Calu3 (cell line): ENCODE measurements at regions of chr6 and their contacts with region 1.

Region 1: GRCh38 chr6:27893059-27893835 is 18.9 kb downstream of the OR2B2 start:
- DNase-seq: peak; percentile 94
- H3K4me3 Mint-ChIP-seq: no peak overlapping the region
- H3K27ac Mint-ChIP-seq: no peak overlapping the region
- H3K4me1 Mint-ChIP-seq: peaks cover 19% of the 10 kb centered on the region
- H3K27me3 Mint-ChIP-seq: no peaks in the 10 kb centered on the region
- CTCF ChIP-seq: no peak

Region 2: DNA sequence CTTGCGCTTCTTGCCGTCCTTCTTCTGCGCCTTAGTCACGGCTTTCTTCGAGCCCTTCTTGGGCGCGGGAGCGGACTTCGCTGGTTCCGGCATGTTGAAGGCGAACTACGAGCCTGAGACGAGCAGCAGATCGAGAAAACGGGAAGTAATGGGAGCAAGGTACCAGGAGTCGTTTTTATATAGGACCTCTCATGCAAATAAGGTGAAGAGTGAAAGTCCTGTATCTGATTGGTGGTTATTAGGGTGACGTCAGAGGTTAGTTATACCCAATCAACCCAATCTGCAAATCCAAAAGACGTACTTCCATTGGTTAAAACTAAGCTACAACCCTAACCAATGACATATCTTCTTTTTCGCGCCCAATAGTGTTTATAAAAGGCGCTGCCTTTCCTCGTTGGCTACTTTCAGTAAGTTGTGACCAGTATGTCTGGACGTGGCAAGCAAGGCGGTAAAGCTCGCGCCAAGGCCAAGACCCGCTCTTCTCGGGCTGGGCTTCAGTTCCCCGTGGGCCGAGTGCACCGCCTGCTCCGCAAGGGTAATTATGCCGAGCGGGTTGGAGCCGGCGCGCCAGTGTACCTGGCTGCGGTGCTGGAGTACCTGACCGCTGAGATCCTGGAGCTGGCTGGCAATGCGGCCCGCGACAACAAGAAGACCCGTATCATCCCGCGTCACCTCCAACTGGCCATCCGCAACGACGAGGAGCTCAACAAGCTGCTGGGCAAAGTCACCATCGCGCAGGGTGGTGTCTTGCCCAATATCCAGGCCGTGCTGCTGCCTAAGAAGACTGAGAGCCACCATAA is 746.3 kb before region 1 on chr6:
- CTCF ChIA-PET with region 1: interaction called, 6 read pairs
- intact Hi-C with region 1: loop called (anchors 5 kb)
- DNase-seq: peak; percentile 89
- H3K4me3 Mint-ChIP-seq: no peak overlapping the region
- H3K27ac Mint-ChIP-seq: no peak overlapping the region
- H3K4me1 Mint-ChIP-seq: no peaks in the 10 kb centered on the region
- H3K27me3 Mint-ChIP-seq: no peaks in the 10 kb centered on the region
- CTCF ChIP-seq: no peak

Region 3: GRCh38 chr6:27687154-27688013 is 205.9 kb before region 1 on chr6:
- CTCF ChIA-PET with region 1: no interaction called
- intact Hi-C with region 1: loop called (anchors 5 kb)
- DNase-seq: peak; percentile 92
- H3K4me3 Mint-ChIP-seq: peak overlapping the region; percentile 84
- H3K27ac Mint-ChIP-seq: peak overlapping the region; percentile 84
- H3K4me1 Mint-ChIP-seq: peaks cover 14% of the 10 kb centered on the region
- H3K27me3 Mint-ChIP-seq: no peaks in the 10 kb centered on the region
- CTCF ChIP-seq: peak; percentile 87

Region 4: GRCh38 chr6:27795697-27796494 is 97.4 kb before region 1 on chr6:
- CTCF ChIA-PET with region 1: interaction called, 10 read pairs
- intact Hi-C with region 1: no loop called
- DNase-seq: peak; percentile 86
- H3K4me3 Mint-ChIP-seq: peak overlapping the region; percentile 36
- H3K27ac Mint-ChIP-seq: peak overlapping the region; percentile 96
- H3K4me1 Mint-ChIP-seq: peaks cover 25% of the 10 kb centered on the region
- H3K27me3 Mint-ChIP-seq: no peaks in the 10 kb centered on the region
- CTCF ChIP-seq: peak; percentile 66

Region 5: DNA sequence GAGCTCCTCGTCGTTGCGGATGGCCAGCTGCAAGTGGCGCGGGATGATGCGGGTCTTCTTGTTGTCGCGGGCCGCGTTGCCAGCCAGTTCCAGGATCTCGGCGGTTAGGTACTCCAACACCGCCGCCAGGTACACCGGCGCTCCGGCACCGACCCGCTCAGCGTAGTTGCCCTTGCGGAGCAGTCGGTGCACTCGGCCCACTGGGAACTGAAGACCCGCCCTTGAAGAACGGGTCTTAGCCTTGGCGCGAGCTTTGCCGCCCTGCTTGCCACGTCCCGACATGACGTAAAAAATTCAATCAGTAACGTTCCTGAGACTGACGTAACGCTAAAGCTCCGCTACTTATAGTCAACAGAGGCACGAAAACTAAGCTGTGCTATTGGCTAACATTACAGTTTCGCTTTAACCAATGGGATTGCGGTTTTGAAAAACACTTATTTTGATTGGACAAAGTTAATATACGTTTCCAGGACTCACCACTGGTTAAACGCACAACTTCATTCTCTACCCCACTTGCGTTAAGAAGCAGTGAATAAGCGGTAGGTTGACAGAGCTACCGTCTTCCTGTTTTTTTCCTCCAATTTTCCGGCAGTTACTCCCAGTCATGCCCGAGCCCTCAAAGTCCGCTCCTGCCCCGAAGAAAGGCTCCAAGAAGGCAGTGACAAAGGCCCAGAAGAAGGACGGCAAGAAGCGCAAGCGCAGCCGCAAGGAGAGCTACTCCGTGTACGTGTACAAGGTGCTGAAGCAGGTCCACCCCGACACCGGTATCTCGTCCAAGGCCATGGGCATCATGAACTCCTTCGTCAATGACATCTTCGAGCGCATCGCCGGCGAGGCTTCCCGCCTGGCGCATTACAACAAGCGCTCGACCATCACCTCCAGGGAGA is 54.9 kb before region 1 on chr6:
- CTCF ChIA-PET with region 1: interaction called, 28 read pairs
- intact Hi-C with region 1: loop called (anchors 1 kb)
- DNase-seq: peak; percentile 86
- H3K4me3 Mint-ChIP-seq: no peak overlapping the region
- H3K27ac Mint-ChIP-seq: no peak overlapping the region
- H3K4me1 Mint-ChIP-seq: peaks cover 17% of the 10 kb centered on the region
- H3K27me3 Mint-ChIP-seq: no peaks in the 10 kb centered on the region
- CTCF ChIP-seq: no peak